MCF 10A (cell line): ENCODE measurements at regions of chr3 and their contacts with region 1.

Region 1: GRCh38 chr3:112642912-112643506 is 2.1 kb upstream of the CCDC80 start:
- DNase-seq: peak; percentile 94
- H3K4me3 Mint-ChIP-seq: peak overlapping the region; percentile 45
- H3K27ac Mint-ChIP-seq: peak overlapping the region; percentile 75
- H3K4me1 Mint-ChIP-seq: peaks cover 36% of the 10 kb centered on the region
- H3K27me3 Mint-ChIP-seq: no peaks in the 10 kb centered on the region
- CTCF ChIP-seq: peak; percentile 86

Region 2: GRCh38 chr3:112676659-112677234 is 33.7 kb after region 1 on chr3:
- CTCF ChIA-PET with region 1: interaction called, 17 read pairs
- POLR2A ChIA-PET with region 1: interaction called, 7 read pairs
- intact Hi-C with region 1: no loop called
- DNase-seq: peak; percentile 97
- H3K4me3 Mint-ChIP-seq: peak overlapping the region; percentile 45
- H3K27ac Mint-ChIP-seq: peak overlapping the region; percentile 87
- H3K4me1 Mint-ChIP-seq: peaks cover 36% of the 10 kb centered on the region
- H3K27me3 Mint-ChIP-seq: no peaks in the 10 kb centered on the region
- CTCF ChIP-seq: no peak

Region 3: DNA sequence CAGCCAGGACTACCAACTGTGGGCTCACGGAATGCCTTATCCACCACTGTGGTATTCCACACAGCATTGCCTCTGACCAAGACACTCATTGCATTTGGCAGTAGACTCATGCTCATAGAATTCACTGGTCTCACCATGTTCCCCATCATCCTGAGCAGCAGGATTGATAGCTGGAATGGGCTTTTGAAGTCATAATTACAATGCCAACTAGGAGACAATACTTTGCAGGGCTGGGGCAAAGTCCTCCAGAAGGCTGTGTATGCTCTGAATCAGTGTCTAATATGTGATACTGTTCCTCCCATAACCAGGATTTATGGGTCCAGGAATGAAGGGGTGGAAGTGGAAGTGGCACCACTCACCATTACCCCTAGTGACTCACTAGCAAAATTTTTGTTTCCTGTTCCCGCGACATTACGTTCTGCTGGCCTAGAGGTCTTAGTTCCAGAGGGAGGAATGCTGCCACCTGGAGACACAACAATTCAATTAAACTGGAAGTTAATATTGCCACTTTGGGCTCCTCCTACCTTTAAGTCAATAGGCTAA is 56.5 kb after region 1 on chr3:
- CTCF ChIA-PET with region 1: interaction called, 3 read pairs
- POLR2A ChIA-PET with region 1: no interaction called
- intact Hi-C with region 1: loop called (anchors 1 kb)
- DNase-seq: peak; percentile 66
- H3K4me3 Mint-ChIP-seq: no peak overlapping the region
- H3K27ac Mint-ChIP-seq: no peak overlapping the region
- H3K4me1 Mint-ChIP-seq: peaks cover 8% of the 10 kb centered on the region
- H3K27me3 Mint-ChIP-seq: peaks cover 21% of the 10 kb centered on the region
- CTCF ChIP-seq: peak; percentile 44

Region 4: GRCh38 chr3:112807685-112808084 is 164.7 kb after region 1 on chr3:
- CTCF ChIA-PET with region 1: interaction called, 39 read pairs
- POLR2A ChIA-PET with region 1: interaction called, 3 read pairs
- intact Hi-C with region 1: no loop called
- DNase-seq: no peak
- H3K4me3 Mint-ChIP-seq: no peak overlapping the region
- H3K27ac Mint-ChIP-seq: no peak overlapping the region
- H3K4me1 Mint-ChIP-seq: peaks cover 6% of the 10 kb centered on the region
- H3K27me3 Mint-ChIP-seq: no peaks in the 10 kb centered on the region
- CTCF ChIP-seq: no peak

Region 5: GRCh38 chr3:112973325-112974177 is 330.5 kb after region 1 on chr3:
- CTCF ChIA-PET with region 1: interaction called, 103 read pairs
- POLR2A ChIA-PET with region 1: no interaction called
- intact Hi-C with region 1: no loop called
- DNase-seq: no peak
- H3K4me3 Mint-ChIP-seq: no peak overlapping the region
- H3K27ac Mint-ChIP-seq: no peak overlapping the region
- H3K4me1 Mint-ChIP-seq: no peaks in the 10 kb centered on the region
- H3K27me3 Mint-ChIP-seq: peaks cover 45% of the 10 kb centered on the region
- CTCF ChIP-seq: no peak

Region 6: DNA sequence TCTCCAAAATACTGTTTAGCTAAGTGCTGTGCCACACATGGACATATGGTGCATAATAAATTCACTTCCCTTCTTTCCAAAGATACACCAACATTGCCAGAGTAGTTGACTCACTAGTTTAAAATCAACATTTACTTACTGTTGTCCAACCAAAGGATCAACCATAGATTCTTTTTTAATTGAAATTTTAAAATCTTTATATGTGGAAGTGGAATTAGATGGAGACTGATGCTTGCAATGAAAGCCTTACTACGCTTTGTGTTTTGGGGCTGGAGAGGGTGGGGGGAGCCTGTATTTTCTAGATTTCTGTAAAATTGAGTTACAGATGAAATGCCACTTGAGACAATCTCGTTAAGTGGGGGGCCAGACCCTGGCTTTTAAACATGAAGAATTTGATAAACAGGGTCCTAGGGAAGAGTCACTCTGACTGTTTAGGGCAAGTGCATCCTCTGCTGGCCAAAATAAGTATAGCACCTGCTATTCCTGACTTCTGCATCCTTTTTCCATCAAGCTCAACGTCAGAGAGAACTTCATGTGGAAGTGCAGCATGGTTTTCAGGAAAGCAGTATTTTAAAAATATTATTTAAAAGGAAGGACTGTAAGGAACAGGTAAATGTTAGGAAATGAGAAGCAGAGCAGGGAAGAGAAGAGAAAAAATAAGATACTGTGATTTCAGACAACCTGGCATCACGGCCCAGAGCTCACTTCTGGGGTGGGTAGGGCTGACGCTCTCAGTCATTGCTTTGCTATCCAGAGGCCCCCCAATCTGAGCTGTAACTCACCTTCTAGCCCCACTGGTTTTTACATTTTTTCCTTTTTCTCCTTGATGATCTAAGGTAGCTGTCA is 645.0 kb after region 1 on chr3:
- CTCF ChIA-PET with region 1: no interaction called
- POLR2A ChIA-PET with region 1: no interaction called
- intact Hi-C with region 1: loop called (anchors 5 kb)
- DNase-seq: peak; percentile 73
- H3K4me3 Mint-ChIP-seq: no peak overlapping the region
- H3K27ac Mint-ChIP-seq: no peak overlapping the region
- H3K4me1 Mint-ChIP-seq: peaks cover 9% of the 10 kb centered on the region
- H3K27me3 Mint-ChIP-seq: no peaks in the 10 kb centered on the region
- CTCF ChIP-seq: peak; percentile 97